ENCODE measurements at regions of chr12 and their contacts with region 1.

Region 1: DNA sequence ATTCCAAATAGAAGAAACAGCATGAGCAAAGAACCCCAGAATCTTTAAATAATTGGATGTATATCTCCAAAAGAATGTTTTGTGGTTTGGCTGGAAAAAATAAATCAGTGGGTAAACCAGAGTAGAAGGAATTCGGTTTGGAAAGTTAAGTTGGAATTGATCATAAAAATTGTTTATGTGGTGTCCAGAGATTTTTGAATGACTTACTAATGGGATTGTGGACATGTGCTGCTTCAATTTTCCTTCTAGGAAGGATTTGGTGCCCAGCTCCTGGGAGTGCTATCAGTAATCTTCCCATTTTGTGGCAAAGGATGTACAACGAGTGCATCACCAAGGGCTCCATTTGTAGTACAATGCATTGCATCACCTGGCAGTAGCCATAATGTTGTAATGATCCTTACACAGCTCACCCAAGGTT is 224.8 kb downstream of the SLC16A7 start:
- DNase-seq: peak; percentile 39
- H3K4me3 ChIP-seq: no peak overlapping the region
- H3K27me3 ChIP-seq: no peaks in the 10 kb centered on the region
- CTCF ChIP-seq: no peak

Region 2: DNA sequence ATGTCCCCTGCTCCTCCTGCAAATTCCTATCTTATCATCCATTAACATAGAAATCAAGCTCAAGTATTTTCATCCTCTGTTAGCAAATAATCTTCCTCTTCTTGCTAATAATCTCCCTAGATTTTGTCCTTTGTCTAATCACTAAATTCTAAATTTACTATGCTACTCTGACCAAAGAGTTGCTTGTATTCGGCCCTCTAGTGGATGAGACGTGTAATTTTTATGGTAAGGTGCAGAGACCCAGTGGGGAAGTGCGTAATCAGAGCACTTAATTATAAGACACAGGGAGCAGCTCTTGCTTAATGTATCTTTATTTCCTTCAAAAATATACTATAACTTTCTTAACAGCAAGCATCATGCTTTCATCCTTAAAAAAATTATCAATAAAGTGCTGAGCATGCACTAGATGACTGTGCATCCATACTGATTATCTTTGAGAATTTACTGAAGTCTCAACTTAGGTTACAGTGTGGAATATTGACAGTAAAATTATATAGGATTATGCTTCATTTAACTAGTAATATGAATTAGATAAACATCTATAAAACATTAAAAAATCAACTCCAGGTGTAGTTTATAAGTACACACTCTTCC is 12.2 kb before region 1 on chr12:
- CTCF ChIA-PET with region 1: interaction called, 24 read pairs
- POLR2A ChIA-PET with region 1: no interaction called
- DNase-seq: no peak
- H3K4me3 ChIP-seq: no peak overlapping the region
- H3K27me3 ChIP-seq: no peaks in the 10 kb centered on the region
- CTCF ChIP-seq: peak; percentile 69

Region 3: GRCh38 chr12:59834659-59835474 is 14.3 kb after region 1 on chr12:
- CTCF ChIA-PET with region 1: interaction called, 10 read pairs
- POLR2A ChIA-PET with region 1: no interaction called
- DNase-seq: no peak
- H3K4me3 ChIP-seq: no peak overlapping the region
- H3K27me3 ChIP-seq: no peaks in the 10 kb centered on the region
- CTCF ChIP-seq: peak; percentile 33

Measured in BJ (cell line).